Activated T-helper 1 cell treated with anti-CD3 and anti-CD28 coated beads, Interleukin-12 subunit alpha, Interleukin-12 subunit beta, Interleukin-2, Interleukin-4 antibody, amounts not matched to agents 30 ng/mL and 10 ng/mL and 1 ng/mL, durations not matched to agents 14 hours and 24 hours and 36 hours (primary cell): ENCODE measurements at regions of chr3 and their contacts with region 1.

Region 1: GRCh38 chr3:32733631-32734229 is 48.7 kb downstream of the CNOT10 start:
- DNase-seq: no peak
- H3K4me3 Mint-ChIP-seq: no peak overlapping the region
- H3K27ac Mint-ChIP-seq: no peak overlapping the region
- H3K4me1 Mint-ChIP-seq: no peaks in the 10 kb centered on the region
- H3K27me3 Mint-ChIP-seq: no peaks in the 10 kb centered on the region

Region 2: DNA sequence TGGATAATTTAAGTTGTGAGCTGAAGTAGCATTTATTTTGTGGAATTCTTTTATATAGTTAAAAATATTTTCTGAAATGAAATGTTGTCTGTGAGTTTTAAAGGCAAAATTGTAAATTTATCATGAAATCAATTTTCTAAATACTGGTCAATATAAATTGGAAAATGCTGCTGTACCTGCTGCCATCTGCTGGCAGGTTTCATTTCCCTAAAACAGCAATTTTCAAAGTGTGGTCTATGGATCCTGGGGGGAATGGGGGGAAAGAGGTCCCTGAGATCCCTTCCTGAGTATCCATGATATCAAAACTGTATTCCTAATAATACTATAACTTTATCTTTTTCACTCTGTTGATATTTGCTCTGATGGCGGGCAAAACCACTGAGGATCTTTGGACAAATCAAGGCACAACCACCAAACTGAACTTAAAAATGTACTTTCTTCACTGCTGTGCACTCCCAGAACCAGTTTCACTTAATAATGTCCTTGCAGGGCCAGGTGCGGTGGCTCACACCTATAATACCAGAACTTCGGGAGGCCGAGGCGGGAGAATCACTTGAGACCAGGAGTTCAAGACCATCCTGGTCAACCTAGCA is 200.5 kb after region 1 on chr3:
- intact Hi-C with region 1: loop called (anchors 1 kb)
- DNase-seq: no peak
- H3K4me3 Mint-ChIP-seq: no peak overlapping the region
- H3K27ac Mint-ChIP-seq: no peak overlapping the region
- H3K4me1 Mint-ChIP-seq: no peaks in the 10 kb centered on the region
- H3K27me3 Mint-ChIP-seq: peaks cover 2% of the 10 kb centered on the region